Tibial artery (tissue), 4 donors: ENCODE measurements at regions of chr1 and their contacts with region 1.

Region 1: GRCh38 chr1:211680752-211681327 is 5.4 kb upstream of the NEK2 start:
- DNase-seq: peak in 1 of 2 donors; percentile 49
- H3K4me3 ChIP-seq: no peak overlapping the region
- H3K27ac ChIP-seq: no peak overlapping the region
- H3K4me1 ChIP-seq: peaks cover 0 to 3% (median 1%) of the 10 kb centered on the region in 4 donors
- H3K27me3 ChIP-seq: no peaks in the 10 kb centered on the region
- CTCF ChIP-seq: peak; percentile 67 to 78

Region 2: DNA sequence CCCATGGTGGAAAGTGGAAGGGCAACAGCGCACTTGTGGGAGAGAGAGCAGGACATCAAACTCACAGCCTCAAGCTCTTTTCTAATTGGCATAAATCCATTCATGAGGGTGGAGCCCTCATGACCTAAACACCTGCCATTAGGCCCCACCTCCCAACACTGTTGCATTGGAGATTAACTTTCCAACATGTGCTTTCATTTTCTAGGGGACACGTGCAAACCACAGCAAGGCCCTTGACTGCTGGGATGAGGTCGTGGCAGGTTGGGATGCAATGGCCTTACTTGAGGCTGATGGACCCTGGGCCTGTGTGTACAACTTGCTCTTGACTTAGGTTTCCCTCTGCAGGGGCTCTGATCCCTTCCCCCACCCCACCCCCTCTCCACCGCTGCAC is 30.5 kb after region 1 on chr1:
- intact Hi-C with region 1: no loop called
- DNase-seq: no peak
- H3K4me3 ChIP-seq: no peak overlapping the region
- H3K27ac ChIP-seq: no peak overlapping the region
- H3K4me1 ChIP-seq: no peaks in the 10 kb centered on the region
- H3K27me3 ChIP-seq: no peaks in the 10 kb centered on the region
- CTCF ChIP-seq: no peak

Region 3: DNA sequence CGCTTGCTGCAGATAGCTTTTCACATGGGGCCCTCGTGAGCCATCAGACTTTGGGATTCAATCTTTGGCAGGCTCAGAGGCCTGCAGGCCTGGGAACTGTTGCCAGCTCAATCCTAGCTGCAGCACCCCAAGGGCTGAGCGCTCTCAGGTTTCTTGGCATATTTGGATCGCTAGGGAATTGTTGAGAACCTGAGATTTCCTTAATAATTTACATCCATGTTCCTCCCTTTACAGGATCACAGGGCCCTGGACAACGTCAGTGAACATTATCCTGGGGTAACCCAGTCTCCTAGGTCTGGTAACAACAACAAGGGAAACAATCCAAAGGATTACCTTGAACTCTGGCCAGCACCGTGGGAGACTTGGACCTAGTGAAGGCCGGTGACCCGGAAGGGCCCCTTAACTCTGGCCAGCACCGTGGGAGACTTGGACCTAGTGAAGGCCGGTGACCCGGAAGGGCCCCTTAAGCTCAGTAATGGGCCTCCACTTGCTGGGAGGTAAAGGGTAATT is 43.9 kb after region 1 on chr1:
- intact Hi-C with region 1: no loop called
- DNase-seq: no peak
- H3K4me3 ChIP-seq: no peak overlapping the region
- H3K27ac ChIP-seq: no peak overlapping the region
- H3K4me1 ChIP-seq: no peaks in the 10 kb centered on the region
- H3K27me3 ChIP-seq: no peaks in the 10 kb centered on the region
- CTCF ChIP-seq: no peak

Region 4: GRCh38 chr1:211830330-211831142 is 149.7 kb after region 1 on chr1 and contains the start of gene LPGAT1:
- intact Hi-C with region 1: loop called (anchors 10 kb)
- DNase-seq: peak; percentile 58 to 88
- H3K4me3 ChIP-seq: peak within 1 kb of the TSS; percentile 76 to 86
- H3K27ac ChIP-seq: peak within 1 kb of the TSS; percentile 87 to 89
- H3K4me1 ChIP-seq: peaks cover 0 to 27% (median 15%) of the 10 kb centered on the region in 4 donors
- H3K27me3 ChIP-seq: no peaks in the 10 kb centered on the region
- CTCF ChIP-seq: peak; percentile 40 to 63